Activated naive CD4-positive, alpha-beta T cell treated with anti-CD3 and anti-CD28 coated beads for 36 hours (primary cell): ENCODE measurements at regions of chr1 and their contacts with region 1.

Region 1: GRCh38 chr1:155934097-155934935 is at the start of gene KHDC4:
- DNase-seq: peak; percentile 97
- H3K4me3 Mint-ChIP-seq: no peak within 1 kb of the TSS
- H3K27ac Mint-ChIP-seq: no peak within 1 kb of the TSS
- H3K4me1 Mint-ChIP-seq: peaks cover 46% of the 10 kb centered on the region
- H3K27me3 Mint-ChIP-seq: no peaks in the 10 kb centered on the region
- total RNA-seq, gene KHDC4: 82.3 to 87.2 TPM

Region 2: DNA sequence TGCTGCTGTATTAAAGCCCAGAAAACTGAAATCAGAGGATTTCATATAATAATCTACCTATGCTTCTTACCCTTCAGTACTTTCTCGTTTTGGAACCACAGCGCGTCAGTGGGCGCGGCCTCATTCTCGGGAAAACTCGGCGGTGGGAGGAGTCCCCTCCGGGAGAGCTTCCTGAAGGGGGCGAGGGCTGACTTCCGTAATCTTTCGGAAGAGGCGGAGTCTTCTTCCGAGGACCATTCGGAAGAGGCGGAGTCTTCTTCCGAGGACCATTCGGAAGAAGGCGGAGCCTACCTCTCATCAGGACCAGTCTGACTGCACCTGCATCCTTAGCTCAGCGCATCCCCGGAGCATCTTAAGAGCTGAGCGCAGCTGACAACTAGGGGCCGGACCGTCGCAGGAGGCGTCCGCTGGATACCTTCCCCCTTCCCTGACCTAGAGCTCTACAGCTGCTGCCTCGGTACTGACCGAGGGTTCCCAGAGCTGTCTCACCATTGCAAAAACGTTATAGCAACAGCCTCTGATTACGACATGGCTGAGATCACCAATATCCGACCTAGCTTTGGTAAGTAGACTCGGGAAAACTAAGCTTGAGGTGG is 75.0 kb before region 1 on chr1 and contains the start of gene SYT11:
- CTCF ChIA-PET with region 1: no interaction called
- intact Hi-C with region 1: loop called (anchors 1 kb)
- DNase-seq: peak; percentile 98
- H3K4me3 Mint-ChIP-seq: peak within 1 kb of the TSS; percentile 100
- H3K27ac Mint-ChIP-seq: peak within 1 kb of the TSS; percentile 83
- H3K4me1 Mint-ChIP-seq: peaks cover 53% of the 10 kb centered on the region
- H3K27me3 Mint-ChIP-seq: peaks cover 24% of the 10 kb centered on the region
- total RNA-seq, gene SYT11: 6.3 to 7.0 TPM

Region 3: GRCh38 chr1:155946633-155947219 is 12.4 kb after region 1 on chr1:
- CTCF ChIA-PET with region 1: interaction called, 6 read pairs
- intact Hi-C with region 1: loop called (anchors 1 kb)
- DNase-seq: no peak
- H3K4me3 Mint-ChIP-seq: no peak overlapping the region
- H3K27ac Mint-ChIP-seq: peak overlapping the region; percentile 99
- H3K4me1 Mint-ChIP-seq: peaks cover 56% of the 10 kb centered on the region
- H3K27me3 Mint-ChIP-seq: no peaks in the 10 kb centered on the region

Region 4: DNA sequence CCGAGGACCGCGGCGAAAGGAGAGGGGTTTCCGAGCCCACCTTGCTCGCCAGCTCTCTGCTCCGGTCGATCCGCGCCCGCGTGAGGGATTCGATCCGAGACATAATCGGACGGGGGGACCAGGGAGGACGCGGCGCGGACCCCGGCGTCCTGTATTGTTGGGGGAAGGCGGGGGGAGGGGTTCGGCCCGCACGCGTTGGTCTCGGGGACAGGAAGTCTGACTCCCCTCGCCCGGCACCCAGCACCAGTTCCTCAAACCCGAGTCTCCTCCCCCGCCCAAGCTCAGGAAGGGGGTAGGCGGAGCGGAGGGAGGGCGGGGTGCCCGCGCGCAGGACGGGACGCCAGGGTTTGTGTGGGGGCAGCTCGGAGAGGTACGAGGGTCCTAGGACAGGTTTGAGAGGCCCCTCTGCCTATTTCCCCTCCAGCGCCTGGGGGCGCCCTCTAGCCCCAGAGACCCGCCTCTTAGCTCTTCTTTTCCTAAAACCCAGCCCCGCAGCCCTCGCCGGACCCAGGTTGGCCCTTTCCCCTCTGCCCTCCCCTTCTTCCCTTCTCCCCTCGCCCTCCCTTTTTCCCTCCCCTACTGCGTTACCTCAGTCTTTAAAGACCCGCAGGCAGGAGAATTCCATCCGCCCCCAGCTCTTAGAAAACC is 44.1 kb after region 1 on chr1 and contains the start of gene ARHGEF2:
- CTCF ChIA-PET with region 1: interaction called, 135 read pairs
- intact Hi-C with region 1: loop called (anchors 1 kb)
- DNase-seq: peak; percentile 87
- H3K4me3 Mint-ChIP-seq: peak within 1 kb of the TSS; percentile 98
- H3K27ac Mint-ChIP-seq: peak within 1 kb of the TSS; percentile 99
- H3K4me1 Mint-ChIP-seq: peaks cover 64% of the 10 kb centered on the region
- H3K27me3 Mint-ChIP-seq: no peaks in the 10 kb centered on the region
- total RNA-seq, gene ARHGEF2: 154 to 159 TPM

Region 5: DNA sequence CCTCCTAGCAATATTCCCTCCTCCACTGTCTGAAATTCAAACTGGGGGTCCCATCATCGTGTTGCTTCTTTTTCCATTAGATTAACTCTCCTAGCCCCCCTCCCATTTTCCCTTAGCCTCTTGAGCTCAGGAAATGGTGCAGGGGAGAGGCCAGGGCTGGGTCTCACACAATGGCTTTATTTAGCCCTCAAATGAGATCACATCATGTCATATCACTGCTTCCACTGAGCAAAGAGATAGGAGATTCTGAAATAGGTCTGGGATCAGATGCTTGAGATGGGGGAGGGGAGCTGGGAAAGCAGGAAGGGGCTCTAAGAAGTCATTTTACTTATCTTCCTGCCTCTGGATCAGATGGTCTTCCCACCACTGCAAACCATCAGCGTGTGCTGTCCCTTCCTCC is 61.9 kb after region 1 on chr1:
- CTCF ChIA-PET with region 1: interaction called, 129 read pairs
- intact Hi-C with region 1: no loop called
- DNase-seq: no peak
- H3K4me3 Mint-ChIP-seq: no peak overlapping the region
- H3K27ac Mint-ChIP-seq: no peak overlapping the region
- H3K4me1 Mint-ChIP-seq: no peaks in the 10 kb centered on the region
- H3K27me3 Mint-ChIP-seq: no peaks in the 10 kb centered on the region

Region 6: DNA sequence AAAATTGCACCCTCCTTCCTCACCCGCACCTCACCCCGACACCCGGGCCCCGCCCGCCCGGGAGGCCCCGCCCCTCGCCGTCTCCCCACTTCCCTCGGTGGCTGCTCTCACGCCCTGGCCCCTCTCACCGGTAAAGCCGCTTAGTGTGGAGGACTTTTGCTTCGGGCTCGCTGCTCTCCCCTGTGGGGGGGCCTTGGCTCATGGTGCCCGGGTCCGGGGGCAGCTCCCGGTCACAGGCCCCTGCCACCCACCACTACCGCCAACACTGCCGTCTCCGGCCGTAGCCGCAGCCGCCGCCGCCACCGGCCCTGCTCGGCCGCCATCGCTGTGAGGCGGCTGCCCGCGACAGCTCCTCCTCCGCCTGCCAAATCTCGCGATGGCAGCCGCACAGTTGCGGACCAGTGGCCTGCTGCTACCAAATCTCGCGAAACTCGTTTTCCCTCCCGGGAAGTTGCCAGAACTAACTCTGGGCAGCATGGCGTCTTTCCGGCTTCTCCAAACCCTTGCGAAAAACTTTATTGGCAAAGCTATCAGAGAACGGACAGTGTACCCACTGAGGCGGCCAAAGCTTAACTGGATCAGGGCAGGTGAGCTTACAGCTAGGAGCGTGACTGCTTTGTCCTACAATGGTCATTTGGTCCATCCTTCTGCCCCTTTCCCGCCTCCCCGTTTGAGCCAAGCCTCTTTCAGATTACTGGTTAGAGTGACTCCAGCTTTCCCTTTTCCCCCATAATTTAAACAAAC is 348.3 kb after region 1 on chr1 and contains the start of gene SMG5:
- CTCF ChIA-PET with region 1: no interaction called
- intact Hi-C with region 1: loop called (anchors 1 kb)
- DNase-seq: peak; percentile 99
- H3K4me3 Mint-ChIP-seq: peak within 1 kb of the TSS; percentile 99
- H3K27ac Mint-ChIP-seq: peak within 1 kb of the TSS; percentile 92
- H3K4me1 Mint-ChIP-seq: peaks cover 27% of the 10 kb centered on the region
- H3K27me3 Mint-ChIP-seq: no peaks in the 10 kb centered on the region
- total RNA-seq, gene SMG5: 77.1 to 83.4 TPM